BJ (cell line): ENCODE measurements at regions of chr11 and their contacts with region 1.

Region 1: GRCh38 chr11:73661035-73661628 is 14.8 kb downstream of the PLEKHB1 start:
- DNase-seq: peak; percentile 20
- H3K4me3 ChIP-seq: peak overlapping the region; percentile 40
- H3K27me3 ChIP-seq: no peaks in the 10 kb centered on the region
- CTCF ChIP-seq: peak; percentile 96

Region 2: DNA sequence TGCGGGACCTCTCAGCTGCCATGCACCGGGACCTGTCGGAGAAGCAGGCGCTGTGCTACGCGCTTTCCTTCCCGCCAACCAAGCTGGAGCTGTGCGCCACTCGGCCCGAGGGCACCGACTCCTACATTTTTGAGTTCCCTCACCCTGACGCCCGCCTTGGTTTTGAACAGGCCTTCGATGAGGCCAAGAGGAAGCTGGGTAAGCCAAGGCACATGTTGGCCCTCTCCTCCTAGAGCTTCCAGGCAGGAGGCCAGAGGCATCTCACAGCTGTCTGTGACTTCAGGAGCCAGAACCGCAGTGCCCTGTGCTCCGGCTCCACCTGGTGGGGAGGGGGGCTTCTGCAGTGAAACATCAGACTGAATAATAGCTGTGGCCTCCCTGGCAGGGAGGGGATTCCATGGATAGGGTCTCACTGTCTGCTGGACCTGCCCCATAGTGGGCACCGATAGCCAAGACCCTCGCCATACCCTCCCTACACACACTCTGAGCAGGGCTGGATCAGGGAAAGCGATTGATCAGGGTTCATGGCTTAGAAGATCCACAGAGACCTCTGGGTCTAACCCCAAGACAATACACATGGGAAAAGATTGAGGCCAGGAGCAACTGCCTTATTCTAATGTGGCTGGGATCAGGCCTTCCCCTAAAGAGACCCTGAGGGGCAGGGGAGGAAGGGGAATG is 300.7 kb before region 1 on chr11:
- CTCF ChIA-PET with region 1: interaction called, 13 read pairs
- POLR2A ChIA-PET with region 1: no interaction called
- DNase-seq: no peak
- H3K4me3 ChIP-seq: no peak overlapping the region
- H3K27me3 ChIP-seq: no peaks in the 10 kb centered on the region
- CTCF ChIP-seq: peak; percentile 45

Region 3: GRCh38 chr11:73388265-73389133 is 272.6 kb before region 1 on chr11:
- CTCF ChIA-PET with region 1: interaction called, 18 read pairs
- POLR2A ChIA-PET with region 1: no interaction called
- DNase-seq: no peak
- H3K4me3 ChIP-seq: no peak overlapping the region
- H3K27me3 ChIP-seq: no peaks in the 10 kb centered on the region
- CTCF ChIP-seq: peak; percentile 2; the same call in 1 of the 2 replicates

Region 4: DNA sequence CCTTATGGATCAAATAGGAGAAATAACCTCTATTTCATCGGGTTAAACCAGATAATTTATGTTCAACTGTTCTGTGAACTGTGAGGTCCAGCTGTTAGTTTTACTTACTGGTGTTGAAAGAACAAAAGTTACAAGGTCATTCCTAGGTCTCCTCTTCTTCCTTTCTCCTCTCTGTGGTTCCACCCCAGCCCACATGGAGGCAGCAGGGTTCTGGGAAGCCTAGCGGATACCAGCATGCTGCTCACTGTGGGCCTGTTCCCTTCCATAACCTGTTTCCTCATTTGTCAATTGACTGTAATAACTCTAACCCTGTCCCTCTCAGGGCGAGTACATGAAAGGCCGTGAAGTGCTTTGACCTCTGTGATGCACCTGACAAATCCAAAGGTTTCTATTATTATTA is 257.1 kb before region 1 on chr11:
- CTCF ChIA-PET with region 1: interaction called, 100 read pairs
- POLR2A ChIA-PET with region 1: no interaction called
- DNase-seq: no peak
- H3K4me3 ChIP-seq: no peak overlapping the region
- H3K27me3 ChIP-seq: no peaks in the 10 kb centered on the region
- CTCF ChIP-seq: peak; percentile 76

Region 5: DNA sequence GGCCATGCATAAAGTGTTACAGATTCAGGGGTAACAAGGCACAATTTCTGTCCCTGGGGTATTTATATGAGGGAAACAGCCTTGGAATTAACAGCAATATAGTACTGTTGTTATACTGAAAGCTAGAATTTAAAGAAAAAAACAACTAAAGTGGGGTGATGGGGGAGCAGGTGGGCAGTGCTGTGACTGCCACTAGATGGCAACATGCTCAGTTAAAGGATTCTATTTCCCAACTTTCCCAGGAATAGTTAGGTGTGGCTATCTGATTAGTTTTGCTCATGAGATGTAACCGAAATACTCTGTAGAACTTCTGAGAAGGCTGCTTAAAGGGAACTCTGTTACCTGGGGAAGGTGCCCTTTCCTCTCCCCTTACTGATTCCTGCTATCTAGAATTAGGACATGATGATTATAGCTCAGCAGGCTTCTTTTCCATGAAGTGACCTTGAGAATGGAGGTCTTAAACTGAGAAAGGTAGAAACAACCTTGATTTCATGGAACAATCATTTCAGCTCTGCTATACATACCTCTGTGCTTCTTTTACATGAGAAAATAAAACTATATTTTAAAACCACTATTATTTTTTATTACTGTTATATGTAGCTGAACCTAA is 182.3 kb before region 1 on chr11:
- CTCF ChIA-PET with region 1: interaction called, 25 read pairs
- POLR2A ChIA-PET with region 1: no interaction called
- DNase-seq: no peak
- H3K4me3 ChIP-seq: no peak overlapping the region
- H3K27me3 ChIP-seq: no peaks in the 10 kb centered on the region
- CTCF ChIP-seq: peak; percentile 92

Region 6: GRCh38 chr11:73647459-73648100 is 13.6 kb before region 1 on chr11:
- CTCF ChIA-PET with region 1: interaction called, 66 read pairs
- POLR2A ChIA-PET with region 1: no interaction called
- DNase-seq: peak; percentile 30
- H3K4me3 ChIP-seq: peak overlapping the region; percentile 9; the same call in 1 of the 2 replicates
- H3K27me3 ChIP-seq: peaks cover 15% of the 10 kb centered on the region
- CTCF ChIP-seq: no peak

Region 7: DNA sequence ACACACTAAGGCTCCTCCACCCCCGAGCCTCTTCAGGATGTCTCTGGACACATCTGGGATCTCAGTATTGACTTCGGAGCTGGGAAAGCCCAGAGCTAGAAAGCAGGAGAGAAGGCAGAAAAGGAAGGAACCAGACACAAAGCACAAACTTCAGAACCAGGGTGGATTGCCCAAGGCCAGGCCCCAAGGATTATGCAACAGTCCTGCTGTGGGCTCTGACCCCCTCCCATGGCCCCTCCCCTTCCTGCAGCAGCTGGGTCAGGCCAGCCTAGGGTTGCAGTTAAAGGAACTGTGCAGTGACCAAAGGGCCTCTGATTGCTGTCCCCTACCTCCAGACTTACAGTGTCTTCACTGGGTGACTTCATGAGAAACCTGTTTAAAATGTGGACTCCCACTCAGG is 800.9 kb after region 1 on chr11:
- CTCF ChIA-PET with region 1: no interaction called
- POLR2A ChIA-PET with region 1: no interaction called
- DNase-seq: no peak
- H3K4me3 ChIP-seq: no peak overlapping the region
- H3K27me3 ChIP-seq: peaks cover 20% of the 10 kb centered on the region
- CTCF ChIP-seq: no peak